AG04449 (cell line): ENCODE measurements at regions of chr5 and their contacts with region 1.

Region 1: GRCh38 chr5:132866342-132867045 is at the starts of genes GDF9 and UQCRQ:
- DNase-seq: peak; percentile 98
- H3K4me3 ChIP-seq: peak within 1 kb of the TSS; percentile 92
- CTCF ChIP-seq: peak; percentile 53

Region 2: DNA sequence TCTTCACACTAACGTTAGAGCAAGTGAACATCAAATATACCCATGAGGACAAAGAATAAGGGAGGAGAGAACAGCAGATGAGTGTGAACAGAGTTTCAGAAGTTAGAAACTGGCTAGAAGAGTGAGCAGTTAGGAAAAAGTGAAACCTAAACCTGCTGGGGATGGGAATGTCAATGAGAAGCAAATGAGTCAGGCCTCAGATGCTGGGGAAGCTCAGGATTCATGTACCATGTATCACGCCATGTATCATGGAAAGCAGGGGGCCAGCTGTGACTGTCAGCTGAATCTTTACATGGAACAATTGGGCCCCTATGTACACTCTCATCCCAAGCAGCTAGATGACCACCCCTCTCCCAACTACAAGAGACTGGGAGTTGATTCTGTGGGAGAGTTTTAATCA is 16.4 kb before region 1 on chr5:
- CTCF ChIA-PET with region 1: interaction called, 21 read pairs
- POLR2A ChIA-PET with region 1: interaction called, 4 read pairs
- DNase-seq: no peak
- H3K4me3 ChIP-seq: no peak overlapping the region
- CTCF ChIP-seq: no peak